Ascending aorta (tissue), 2 donors: ENCODE measurements at regions of chr1 and their contacts with region 1.

Region 1: GRCh38 chr1:155323798-155324610 is 3.3 kb downstream of the RUSC1 start:
- DNase-seq: peak; percentile 88 to 97
- H3K4me3 ChIP-seq: peak overlapping the region; percentile 74 to 89
- H3K27ac ChIP-seq: peak overlapping the region; percentile 96 to 97
- H3K4me1 ChIP-seq: peaks cover 9 to 22% of the 10 kb centered on the region in 2 donors
- H3K27me3 ChIP-seq: no peaks in the 10 kb centered on the region
- CTCF ChIP-seq: no peak

Region 2: DNA sequence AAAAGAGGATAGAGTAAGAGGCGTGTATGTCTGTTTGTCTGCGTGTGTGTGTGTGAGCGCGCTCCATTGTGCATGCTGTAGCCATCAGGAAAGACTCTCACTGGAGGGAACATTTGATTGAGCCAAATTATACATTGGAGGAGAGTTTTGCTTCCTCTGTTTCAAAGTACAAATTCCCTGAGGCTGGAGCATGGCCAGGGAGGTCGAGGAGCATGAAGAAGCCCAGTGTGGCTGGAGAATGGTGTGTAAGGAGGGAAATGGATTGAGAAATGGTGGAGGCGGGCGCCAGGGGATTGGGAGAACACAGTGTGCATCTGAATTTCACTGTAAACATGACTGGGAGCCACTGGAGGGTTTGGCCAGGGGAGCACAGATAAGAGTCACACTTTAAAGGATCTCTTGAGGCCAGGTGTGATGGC is 218.4 kb before region 1 on chr1:
- intact Hi-C with region 1: no loop called
- DNase-seq: no peak
- H3K4me3 ChIP-seq: no peak overlapping the region
- H3K27ac ChIP-seq: no peak overlapping the region
- H3K4me1 ChIP-seq: no peaks in the 10 kb centered on the region
- H3K27me3 ChIP-seq: no peaks in the 10 kb centered on the region
- CTCF ChIP-seq: no peak

Region 3: GRCh38 chr1:155135415-155136028 is 188.5 kb before region 1 on chr1 and contains the start of gene SLC50A1:
- intact Hi-C with region 1: loop called (anchors 2 kb)
- DNase-seq: peak; percentile 78 to 98
- H3K4me3 ChIP-seq: peak within 1 kb of the TSS; percentile 76 to 80
- H3K27ac ChIP-seq: peak within 1 kb of the TSS; percentile 97 to 100
- H3K4me1 ChIP-seq: peaks cover 9 to 25% of the 10 kb centered on the region in 2 donors
- H3K27me3 ChIP-seq: no peaks in the 10 kb centered on the region
- CTCF ChIP-seq: peak; percentile 26 to 72 (median 39)
- total RNA-seq, gene SLC50A1: 9.4 TPM

Region 4: DNA sequence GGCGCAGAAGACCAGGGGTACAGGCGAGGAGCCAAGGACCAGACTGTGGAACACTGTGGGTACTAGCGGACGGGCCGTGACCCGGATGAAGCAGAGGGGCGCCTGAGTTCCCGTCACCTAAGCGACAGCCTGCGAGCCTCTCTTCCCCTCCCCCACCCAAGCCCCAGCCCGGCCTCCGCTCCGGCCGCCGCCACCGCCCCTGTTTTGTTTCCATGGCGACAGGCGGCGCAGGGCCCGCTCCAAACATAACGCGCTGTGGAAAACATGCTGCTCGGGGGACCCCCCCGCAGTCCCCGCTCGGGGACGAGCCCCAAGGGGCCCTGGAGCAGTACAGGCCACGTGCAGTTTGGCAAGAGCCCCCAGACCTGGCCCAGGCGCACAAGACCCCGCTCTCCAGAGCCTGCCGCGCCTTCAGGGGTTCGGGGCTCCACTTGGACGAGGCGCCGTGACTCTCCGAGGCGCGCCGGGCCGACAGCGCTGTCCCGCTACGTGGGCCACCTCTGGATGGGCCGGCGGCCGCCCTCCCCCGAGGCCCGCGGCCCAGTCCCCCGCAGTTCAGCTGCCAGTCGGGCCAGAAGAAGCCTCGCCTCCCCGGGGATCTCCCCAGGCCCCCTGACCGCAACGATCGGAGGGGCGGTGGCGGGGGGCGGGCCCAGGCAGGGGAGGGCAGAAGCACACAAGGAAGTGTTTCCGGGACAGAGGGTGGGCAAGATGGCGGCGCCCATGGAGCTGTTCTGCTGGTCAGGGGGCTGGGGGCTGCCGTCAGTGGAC is 115.3 kb before region 1 on chr1 and contains the start of gene MTX1:
- intact Hi-C with region 1: loop called (anchors 2 kb)
- DNase-seq: peak; percentile 77 to 97
- H3K4me3 ChIP-seq: peak within 1 kb of the TSS; percentile 77 to 79
- H3K27ac ChIP-seq: peak within 1 kb of the TSS; percentile 99 to 100
- H3K4me1 ChIP-seq: peaks cover 7 to 27% of the 10 kb centered on the region in 2 donors
- H3K27me3 ChIP-seq: no peaks in the 10 kb centered on the region
- CTCF ChIP-seq: peak in 1 of 3 experiments; percentile 7
- total RNA-seq, gene MTX1: 23.9 TPM

Region 5: GRCh38 chr1:155308493-155309422 is 15.2 kb before region 1 on chr1 and contains the start of gene FDPS:
- intact Hi-C with region 1: loop called (anchors 1 kb)
- DNase-seq: peak; percentile 98 to 100
- H3K4me3 ChIP-seq: peak within 1 kb of the TSS; percentile 70 to 77
- H3K27ac ChIP-seq: peak within 1 kb of the TSS; percentile 87
- H3K4me1 ChIP-seq: peaks cover 6 to 9% of the 10 kb centered on the region in 2 donors
- H3K27me3 ChIP-seq: no peaks in the 10 kb centered on the region
- CTCF ChIP-seq: peak in 1 of 3 experiments; percentile 23
- total RNA-seq, gene FDPS: 51.7 TPM

Region 6: DNA sequence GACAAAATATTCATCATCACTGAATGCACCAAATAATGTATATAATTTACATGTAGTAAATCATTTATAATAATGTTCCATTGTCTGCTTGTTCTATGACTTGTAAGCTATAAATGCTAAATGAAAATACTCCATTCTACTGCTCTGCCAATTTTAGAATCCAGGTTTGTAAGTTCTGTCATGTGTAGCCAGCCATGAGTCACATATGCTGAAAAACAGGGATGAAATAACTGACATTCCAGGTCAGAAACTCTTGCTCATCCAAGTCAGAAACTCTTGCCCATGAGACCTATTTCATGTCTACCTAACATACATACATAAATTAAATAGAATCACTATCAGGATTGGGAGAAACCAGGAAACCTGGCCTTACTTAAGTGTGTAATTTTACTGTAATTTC is 143.0 kb after region 1 on chr1:
- intact Hi-C with region 1: no loop called
- DNase-seq: no peak
- H3K4me3 ChIP-seq: no peak overlapping the region
- H3K27ac ChIP-seq: no peak overlapping the region
- H3K4me1 ChIP-seq: peaks cover 0 to 25% of the 10 kb centered on the region in 2 donors
- H3K27me3 ChIP-seq: no peaks in the 10 kb centered on the region
- CTCF ChIP-seq: no peak

Region 7: DNA sequence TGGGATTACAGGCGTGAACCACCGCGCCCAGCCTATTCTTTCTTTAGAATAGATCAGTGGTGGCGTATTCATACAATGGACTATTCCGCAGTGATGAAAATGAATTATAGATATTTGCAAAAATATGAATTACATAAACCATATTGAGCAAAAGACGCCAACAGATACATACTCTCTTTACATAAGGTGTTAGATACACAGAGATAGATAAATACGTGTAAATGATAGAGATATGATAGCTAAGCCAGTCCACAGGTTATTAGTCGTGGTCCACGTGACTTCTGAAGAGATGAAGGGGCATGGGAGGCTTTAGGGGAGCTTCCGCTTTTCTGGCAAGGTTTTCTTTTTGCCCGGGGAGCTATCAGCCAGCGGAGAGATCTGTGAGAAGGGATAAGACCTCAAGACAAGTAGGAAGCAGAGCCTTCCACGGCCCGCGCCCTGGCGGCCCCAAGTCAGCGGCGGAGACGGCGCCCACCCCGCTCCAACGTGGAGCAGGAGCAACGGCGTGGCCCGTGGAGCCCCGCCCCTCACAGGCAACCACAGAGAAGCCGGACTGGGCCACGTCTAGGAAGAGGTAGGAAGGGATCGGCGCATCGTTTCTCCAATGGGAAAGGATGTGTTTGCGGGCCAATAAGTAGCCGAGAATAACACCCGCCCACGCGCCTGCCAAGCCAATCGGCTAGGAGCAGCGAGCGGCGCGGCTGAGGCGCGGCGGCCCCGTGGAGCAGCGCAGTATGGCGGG is 285.7 kb after region 1 on chr1 and contains the start of gene MSTO1:
- intact Hi-C with region 1: loop called (anchors 1 kb)
- DNase-seq: peak; percentile 94 to 99
- H3K4me3 ChIP-seq: peak within 1 kb of the TSS; percentile 61 to 75
- H3K27ac ChIP-seq: peak within 1 kb of the TSS; percentile 51 to 68
- H3K4me1 ChIP-seq: no peaks in the 10 kb centered on the region
- H3K27me3 ChIP-seq: no peaks in the 10 kb centered on the region
- CTCF ChIP-seq: no peak
- total RNA-seq, gene MSTO1: 8.6 TPM

Region 8: DNA sequence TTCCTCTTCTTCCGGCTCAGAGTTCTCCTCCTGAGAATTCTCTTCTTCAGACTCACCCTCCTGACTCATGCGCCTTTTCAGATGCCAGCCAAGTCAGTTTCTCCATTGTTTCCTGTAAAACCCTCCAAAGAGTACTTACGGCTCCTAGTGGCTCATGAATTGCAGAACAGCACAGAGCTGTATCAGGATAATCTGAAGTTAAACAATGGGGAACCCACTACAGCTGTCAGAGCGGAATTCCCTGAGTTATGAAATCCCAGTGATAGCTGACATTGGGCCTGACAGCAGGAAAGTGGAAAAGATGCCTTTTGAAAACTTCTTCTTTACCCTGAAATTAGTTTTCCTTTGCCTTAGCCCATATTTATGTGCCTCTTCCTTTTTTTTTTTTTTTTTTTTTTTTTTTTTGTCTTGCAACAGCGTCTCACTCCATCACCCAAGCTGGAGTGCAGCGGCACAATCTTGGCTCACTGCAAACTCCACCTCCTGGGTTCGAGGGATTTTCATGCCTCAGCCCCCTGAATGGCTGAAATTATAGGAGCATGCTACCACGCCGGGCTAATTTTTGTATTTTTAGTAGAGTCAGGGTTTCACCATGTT is 324.6 kb after region 1 on chr1:
- intact Hi-C with region 1: no loop called
- DNase-seq: peak in 1 of 2 donors; percentile 81
- H3K4me3 ChIP-seq: peak overlapping the region in 1 of 2 donors; percentile 47
- H3K27ac ChIP-seq: peak overlapping the region; percentile 61 to 71
- H3K4me1 ChIP-seq: peaks cover 7 to 24% of the 10 kb centered on the region in 2 donors
- H3K27me3 ChIP-seq: no peaks in the 10 kb centered on the region
- CTCF ChIP-seq: peak in 2 of 3 experiments; percentile 47 to 66